ENCODE measurements at regions of chr1 and their contacts with region 1.

Region 1: DNA sequence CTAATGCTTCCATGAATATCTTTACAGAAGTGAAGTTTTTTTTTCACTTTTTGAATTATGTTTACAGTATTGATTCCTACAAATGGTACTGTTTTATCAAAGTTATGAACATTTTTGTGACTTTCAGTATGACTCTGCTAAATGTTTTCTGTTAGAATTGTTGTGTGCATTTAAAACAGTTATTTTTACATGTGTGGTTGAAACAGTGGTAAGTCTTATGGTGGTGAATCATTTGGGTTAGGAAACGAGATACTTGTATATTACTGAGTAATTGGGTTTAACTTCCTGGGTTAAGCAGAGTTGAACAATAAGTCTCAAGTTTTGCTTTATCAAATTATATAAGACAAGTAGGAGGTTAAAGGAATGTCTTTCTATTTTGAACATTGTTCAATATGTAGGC is 66.8 kb downstream of the VPS13D start:
- DNase-seq: no peak
- H3K4me3 ChIP-seq: no peak overlapping the region
- H3K27ac ChIP-seq: no peak overlapping the region
- H3K4me1 ChIP-seq: no peaks in the 10 kb centered on the region
- H3K27me3 ChIP-seq: no peaks in the 10 kb centered on the region
- CTCF ChIP-seq: no peak
- EP300 ChIP-seq: no peak
- POLR2A ChIP-seq: no peak

Region 2: GRCh38 chr1:10472220-10473144 is 1824.1 kb before region 1 on chr1 and contains the start of gene DFFA:
- in situ Hi-C with region 1: no loop called
- intact Hi-C with region 1: loop called (anchors 10 kb)
- DNase-seq: peak; percentile 94
- H3K4me3 ChIP-seq: peak within 1 kb of the TSS; percentile 64 to 88 (median 68)
- H3K27ac ChIP-seq: peak within 1 kb of the TSS; percentile 71 to 84 (median 80)
- H3K4me1 ChIP-seq: peaks cover 11 to 35% (median 27%) of the 10 kb centered on the region in 4 donors
- H3K27me3 ChIP-seq: no peaks in the 10 kb centered on the region
- CTCF ChIP-seq: no peak
- EP300 ChIP-seq: no peak
- POLR2A ChIP-seq: peak; percentile 46
- total RNA-seq, gene DFFA: 7.5 to 31.6 (median 17.1) TPM

Region 3: GRCh38 chr1:12356004-12356890 is 59.6 kb after region 1 on chr1:
- in situ Hi-C with region 1: no loop called
- intact Hi-C with region 1: no loop called
- DNase-seq: no peak
- H3K4me3 ChIP-seq: no peak overlapping the region
- H3K27ac ChIP-seq: peak overlapping the region in 2 of 4 donors; percentile 25 to 29
- H3K4me1 ChIP-seq: peaks cover 0 to 5% (median 0%) of the 10 kb centered on the region in 4 donors
- H3K27me3 ChIP-seq: no peaks in the 10 kb centered on the region
- CTCF ChIP-seq: no peak
- EP300 ChIP-seq: no peak
- POLR2A ChIP-seq: no peak

Measured in transverse colon (tissue), 4 donors.